CD4-positive, alpha-beta memory T cell (primary cell): ENCODE measurements at regions of chr1 and their contacts with region 1.

Region 1: DNA sequence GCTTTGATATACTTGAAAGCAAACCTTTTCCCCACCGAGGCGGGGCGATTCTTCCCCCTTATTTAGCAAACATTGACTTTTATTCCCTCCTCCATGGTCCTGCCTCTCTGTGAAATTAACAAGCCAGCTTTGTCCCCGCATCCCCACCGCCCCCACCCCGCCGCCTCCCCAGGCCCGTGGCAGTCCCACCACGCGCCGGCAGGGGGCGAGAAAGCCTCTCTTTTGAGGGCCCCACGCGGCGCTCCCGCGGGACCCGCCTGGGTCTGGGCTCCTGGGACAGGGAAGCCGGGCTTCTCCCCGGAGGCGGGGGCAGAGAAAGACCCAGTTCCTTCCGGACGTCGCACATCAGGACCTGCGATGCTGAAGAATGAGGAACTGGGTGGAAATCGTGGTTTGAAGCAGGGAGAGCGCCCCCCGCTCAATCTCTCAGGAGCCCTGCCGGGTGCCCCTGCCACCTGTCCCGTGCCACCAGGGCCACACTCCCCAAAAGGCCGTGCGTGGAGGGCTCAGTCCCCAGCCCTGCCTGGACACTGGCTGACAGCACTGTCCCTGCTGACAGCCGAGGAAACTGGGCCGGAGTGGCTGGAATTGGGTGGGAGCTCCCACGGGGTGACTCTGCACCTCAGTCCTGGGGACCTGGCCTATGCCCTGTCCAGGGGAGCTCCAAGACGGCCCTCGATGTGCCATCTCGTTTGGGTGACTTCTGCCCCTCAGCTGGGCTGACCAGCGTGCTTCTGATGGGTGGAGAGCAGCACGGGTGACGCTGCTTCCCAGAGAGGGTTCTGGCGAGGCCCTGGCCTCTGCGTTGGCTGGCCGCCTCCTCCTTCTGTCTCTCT is 8.6 kb upstream of the ACTRT2 start:
- DNase-seq: peak in 2 of 5 donors; percentile 14 to 20
- H3K4me3 ChIP-seq: no peak overlapping the region
- H3K4me3 Mint-ChIP-seq: peak overlapping the region in 1 of 8 donors; percentile 2
- H3K27ac ChIP-seq: no peak overlapping the region
- H3K27ac Mint-ChIP-seq: no peak overlapping the region
- H3K4me1 ChIP-seq: no peaks in the 10 kb centered on the region
- H3K4me1 Mint-ChIP-seq: peaks cover 0 to 2% (median 0%) of the 10 kb centered on the region in 4 donors
- H3K27me3 ChIP-seq: no peaks in the 10 kb centered on the region
- H3K27me3 Mint-ChIP-seq: peaks cover 15 to 18% of the 10 kb centered on the region in 2 donors

Region 2: GRCh38 chr1:2985067-2985561 is 27.6 kb before region 1 on chr1:
- CTCF ChIA-PET with region 1: no interaction called
- POLR2A ChIA-PET with region 1: no interaction called
- intact Hi-C with region 1: no loop called
- DNase-seq: no peak
- H3K4me3 ChIP-seq: no peak overlapping the region
- H3K4me3 Mint-ChIP-seq: no peak overlapping the region
- H3K27ac ChIP-seq: no peak overlapping the region
- H3K27ac Mint-ChIP-seq: no peak overlapping the region
- H3K4me1 ChIP-seq: no peaks in the 10 kb centered on the region
- H3K4me1 Mint-ChIP-seq: no peaks in the 10 kb centered on the region
- H3K27me3 ChIP-seq: no peaks in the 10 kb centered on the region
- H3K27me3 Mint-ChIP-seq: peaks cover 3 to 4% of the 10 kb centered on the region in 2 donors

Region 3: GRCh38 chr1:3283849-3284248 is 271.2 kb after region 1 on chr1:
- CTCF ChIA-PET with region 1: no interaction called
- POLR2A ChIA-PET with region 1: no interaction called
- intact Hi-C with region 1: loop called (anchors 5 kb)
- DNase-seq: no peak
- H3K4me3 ChIP-seq: no peak overlapping the region
- H3K4me3 Mint-ChIP-seq: no peak overlapping the region
- H3K27ac ChIP-seq: no peak overlapping the region
- H3K27ac Mint-ChIP-seq: no peak overlapping the region
- H3K4me1 ChIP-seq: no peaks in the 10 kb centered on the region
- H3K4me1 Mint-ChIP-seq: no peaks in the 10 kb centered on the region
- H3K27me3 ChIP-seq: no peaks in the 10 kb centered on the region
- H3K27me3 Mint-ChIP-seq: peaks cover 0 to 6% of the 10 kb centered on the region in 2 donors